ENCODE measurements at regions of chr6 and their contacts with region 1.

Region 1: DNA sequence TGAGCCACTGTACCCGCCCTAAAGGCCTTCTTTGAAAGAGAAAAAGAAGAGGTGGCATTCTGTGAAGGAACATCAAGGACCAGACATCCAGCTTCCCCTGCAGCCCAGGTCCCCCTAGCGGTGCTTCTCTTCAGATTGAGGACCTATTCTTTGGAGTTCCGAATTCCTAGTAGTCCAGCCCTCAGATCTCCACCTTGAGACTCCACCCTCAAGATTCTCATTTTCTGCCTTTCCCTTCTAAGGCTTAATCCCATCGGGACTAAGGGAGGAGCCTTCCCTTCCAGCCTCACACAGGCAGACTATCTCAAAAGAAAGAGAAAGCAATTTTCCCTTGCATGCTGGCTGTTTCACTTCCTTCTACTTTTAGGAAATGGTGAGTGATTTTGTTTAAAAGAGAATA is 32.5 kb downstream of the MUC22 start:
- DNase-seq: peak; percentile 31

Region 2: GRCh38 chr6:30828027-30828960 is 214.5 kb before region 1 on chr6:
- in situ Hi-C with region 1: no loop called
- DNase-seq: peak; percentile 80

Region 3: DNA sequence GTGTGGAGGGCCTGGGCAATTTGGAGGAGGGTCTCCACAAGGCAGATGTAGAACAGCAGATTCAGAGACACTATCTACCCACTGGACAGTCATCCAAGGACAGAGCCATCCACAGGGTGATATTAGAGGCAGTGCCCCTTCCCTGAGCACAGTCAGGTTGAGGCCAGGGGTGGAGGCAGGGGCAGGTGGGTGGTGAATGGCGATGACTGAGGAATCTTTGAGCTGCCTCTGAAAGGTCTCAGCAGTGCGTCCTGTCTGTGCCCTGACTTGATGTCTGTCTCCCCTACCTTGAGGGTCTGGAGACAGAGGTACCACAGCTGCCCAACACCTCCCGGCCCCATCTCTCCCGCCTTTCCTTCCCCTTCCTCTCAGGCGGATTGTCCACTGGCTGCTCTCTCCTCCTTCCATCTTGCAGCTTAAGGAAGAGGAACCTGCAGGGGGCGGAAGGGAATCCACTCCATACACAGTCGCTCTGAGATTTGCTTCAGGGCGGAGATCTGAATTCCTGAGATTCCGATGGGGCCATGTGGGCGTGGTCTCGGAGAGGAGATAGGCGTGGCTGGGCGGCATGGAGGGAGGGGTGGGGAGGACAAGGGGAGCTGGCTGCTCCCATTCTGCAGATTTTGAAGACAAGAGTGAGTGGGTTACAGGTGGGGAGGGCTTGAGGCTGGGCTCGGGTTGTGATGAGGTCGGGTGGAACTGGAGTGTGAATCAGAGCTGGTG is 100.3 kb before region 1 on chr6:
- in situ Hi-C with region 1: loop called (anchors 25 kb)
- DNase-seq: peak; percentile 23

Measured in KBM-7 (cell line).